ENCODE measurements at regions of chr14 and their contacts with region 1.

Region 1: DNA sequence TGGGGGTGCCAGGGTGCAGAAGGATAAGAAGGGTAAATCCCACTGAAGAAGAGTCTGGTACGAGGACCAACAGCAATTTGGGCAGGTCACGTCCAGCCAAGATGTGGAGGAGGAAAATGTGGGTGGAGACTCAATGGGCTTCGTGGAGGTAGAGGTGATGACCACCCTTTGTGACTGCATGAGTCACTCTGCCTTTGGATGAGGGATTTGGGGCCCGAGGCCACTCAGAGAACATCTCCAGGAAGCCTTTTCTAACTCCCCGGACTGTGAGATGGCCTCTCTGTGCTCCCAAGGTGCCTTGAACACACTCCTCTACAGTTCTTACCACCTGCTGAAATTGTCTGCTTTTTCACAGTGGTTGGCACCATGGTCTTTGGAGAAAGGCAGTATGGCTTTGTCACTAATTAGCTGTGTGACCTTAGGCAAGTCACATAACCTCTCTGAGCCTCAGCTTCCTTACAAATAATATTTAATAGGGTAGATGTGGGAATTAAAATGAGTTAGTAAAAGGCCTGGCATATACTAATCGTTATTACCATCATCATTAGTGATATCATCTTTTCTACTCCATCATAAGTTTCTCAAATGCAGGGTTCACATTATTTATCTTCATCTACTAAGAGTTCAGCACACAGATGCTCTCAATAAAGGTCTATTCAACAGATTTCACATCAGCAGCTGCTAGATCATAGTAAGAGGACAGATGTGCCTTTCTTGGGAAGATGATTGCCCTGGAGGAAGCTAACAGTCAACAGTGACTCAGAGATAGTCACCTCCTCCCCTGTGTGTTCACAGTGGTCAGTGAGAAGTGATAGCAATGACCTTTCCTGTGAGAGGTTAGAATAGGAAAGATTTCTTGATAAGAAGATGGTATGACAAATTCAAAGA is 66.9 kb upstream of the ARHGAP5 start:
- DNase-seq: peak; percentile 95
- ATAC-seq: peak; percentile 71
- H3K4me3 ChIP-seq: no peak overlapping the region
- H3K27ac ChIP-seq: peak overlapping the region; percentile 88
- H3K4me1 ChIP-seq: peaks cover 61% of the 10 kb centered on the region
- H3K27me3 ChIP-seq: no peaks in the 10 kb centered on the region
- CTCF ChIP-seq: no peak

Region 2: DNA sequence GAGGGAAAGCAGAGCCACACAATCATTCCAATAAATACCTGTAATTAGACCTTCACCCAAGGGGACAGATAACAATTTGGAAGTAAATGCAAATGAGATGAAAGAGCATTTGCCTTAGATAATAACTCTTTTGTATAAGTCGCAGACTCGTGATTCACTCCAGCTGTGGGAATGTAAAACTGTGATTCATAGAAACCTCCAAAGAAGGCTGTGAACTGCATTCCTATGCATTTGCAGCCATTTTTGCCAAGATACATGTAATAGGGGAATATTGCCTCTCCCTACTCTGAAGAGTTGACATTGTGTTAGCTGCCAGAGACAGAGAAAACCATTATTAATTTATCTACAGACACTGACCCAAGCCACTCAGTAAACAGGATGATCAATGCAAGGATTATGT is 115.0 kb before region 1 on chr14:
- CTCF ChIA-PET with region 1: no interaction called
- POLR2A ChIA-PET with region 1: no interaction called
- intact Hi-C with region 1: loop called (anchors 2 kb)
- DNase-seq: peak; percentile 84
- ATAC-seq: peak; percentile 61
- H3K4me3 ChIP-seq: no peak overlapping the region
- H3K27ac ChIP-seq: peak overlapping the region; percentile 59
- H3K4me1 ChIP-seq: peaks cover 36% of the 10 kb centered on the region
- H3K27me3 ChIP-seq: no peaks in the 10 kb centered on the region
- CTCF ChIP-seq: no peak

Region 3: GRCh38 chr14:31950764-31951637 is 59.2 kb before region 1 on chr14:
- CTCF ChIA-PET with region 1: no interaction called
- POLR2A ChIA-PET with region 1: no interaction called
- intact Hi-C with region 1: no loop called
- DNase-seq: peak; percentile 81
- ATAC-seq: peak; percentile 92
- H3K4me3 ChIP-seq: no peak overlapping the region
- H3K27ac ChIP-seq: peak overlapping the region; percentile 25; the same call in 1 of the 2 replicates
- H3K4me1 ChIP-seq: peaks cover 25% of the 10 kb centered on the region
- H3K27me3 ChIP-seq: no peaks in the 10 kb centered on the region
- CTCF ChIP-seq: no peak

Region 4: GRCh38 chr14:31992011-31992447 is 18.2 kb before region 1 on chr14:
- CTCF ChIA-PET with region 1: no interaction called
- POLR2A ChIA-PET with region 1: no interaction called
- intact Hi-C with region 1: loop called (anchors 1 kb)
- DNase-seq: peak; percentile 92
- ATAC-seq: peak; percentile 88
- H3K4me3 ChIP-seq: no peak overlapping the region
- H3K27ac ChIP-seq: peak overlapping the region; percentile 75
- H3K4me1 ChIP-seq: peaks cover 33% of the 10 kb centered on the region
- H3K27me3 ChIP-seq: no peaks in the 10 kb centered on the region
- CTCF ChIP-seq: no peak